Activated T-helper 1 cell treated with anti-CD3 and anti-CD28 coated beads, Interleukin-12 subunit alpha, Interleukin-12 subunit beta, Interleukin-2, Interleukin-4 antibody, amounts not matched to agents 30 ng/mL and 10 ng/mL and 1 ng/mL, durations not matched to agents 14 hours and 24 hours and 36 hours (primary cell): ENCODE measurements at regions of chr10 and their contacts with region 1.

Region 1: GRCh38 chr10:33120700-33121099 is 162.7 kb upstream of the ITGB1 start:
- DNase-seq: no peak
- H3K4me3 Mint-ChIP-seq: peak overlapping the region; percentile 2
- H3K27ac Mint-ChIP-seq: peak overlapping the region; percentile 57
- H3K4me1 Mint-ChIP-seq: peaks cover 45% of the 10 kb centered on the region
- H3K27me3 Mint-ChIP-seq: no peaks in the 10 kb centered on the region

Region 2: GRCh38 chr10:33098951-33099663 is 21.6 kb before region 1 on chr10:
- intact Hi-C with region 1: loop called (anchors 1 kb)
- DNase-seq: no peak
- H3K4me3 Mint-ChIP-seq: no peak overlapping the region
- H3K27ac Mint-ChIP-seq: peak overlapping the region; percentile 73
- H3K4me1 Mint-ChIP-seq: peaks cover 30% of the 10 kb centered on the region
- H3K27me3 Mint-ChIP-seq: peaks cover 2% of the 10 kb centered on the region